ENCODE measurements at regions of chr11 and their contacts with region 1.

Region 1: GRCh38 chr11:117107701-117108590 is 9.7 kb upstream of the SIK3 start:
- DNase-seq: no peak
- H3K4me3 ChIP-seq: no peak overlapping the region
- CTCF ChIP-seq: no peak
- POLR2A ChIP-seq: no peak

Region 2: DNA sequence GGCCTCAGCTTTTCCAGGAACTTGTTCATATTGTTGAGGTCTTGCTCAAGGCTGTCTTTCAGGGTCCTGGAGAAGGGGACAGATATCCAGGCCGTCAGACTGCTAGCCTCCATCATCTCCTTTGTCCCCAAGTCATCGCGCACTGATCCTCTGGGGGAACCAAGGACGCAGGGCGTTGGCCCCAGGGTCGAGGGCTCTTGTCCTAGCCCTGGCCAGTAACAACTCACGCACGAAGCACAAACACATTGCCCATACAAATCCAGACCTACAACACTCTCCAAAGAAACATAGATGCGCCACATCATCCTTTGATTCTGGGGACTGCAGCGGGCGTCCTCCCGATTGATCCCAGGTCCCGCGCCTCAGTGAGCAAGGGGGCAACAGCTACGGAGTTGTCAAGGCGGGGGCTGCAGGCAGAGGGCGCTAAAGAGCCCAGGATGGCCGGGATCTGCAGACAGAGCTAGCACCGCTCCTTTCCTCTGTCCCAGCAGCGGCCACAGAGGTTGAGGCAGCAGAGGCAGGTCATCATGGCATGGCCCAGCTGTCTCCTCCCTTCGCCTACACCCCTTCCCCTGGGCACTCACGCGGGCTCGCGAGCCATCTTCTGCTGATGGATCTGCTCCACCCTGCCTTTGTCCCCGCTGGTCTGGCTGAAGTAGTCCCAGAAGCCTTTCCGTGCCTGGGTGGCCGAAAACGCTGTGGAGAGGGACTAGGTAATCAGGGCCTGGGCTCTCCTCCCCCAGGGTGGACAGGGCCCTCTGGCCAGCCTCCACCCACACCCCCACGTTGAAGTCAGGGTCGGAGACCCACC is 316.7 kb before region 1 on chr11:
- intact Hi-C with region 1: loop called (anchors 5 kb)
- DNase-seq: peak; percentile 57 to 96
- H3K4me3 ChIP-seq: no peak overlapping the region
- CTCF ChIP-seq: peak in 1 of 3 donors; percentile 78
- POLR2A ChIP-seq: no peak

Region 3: GRCh38 chr11:117152066-117152465 is 44.1 kb after region 1 on chr11:
- intact Hi-C with region 1: no loop called
- DNase-seq: no peak
- H3K4me3 ChIP-seq: no peak overlapping the region
- CTCF ChIP-seq: no peak
- POLR2A ChIP-seq: no peak